GM12878 (cell line): ENCODE measurements at regions of chr1 and their contacts with region 1.

Region 1: DNA sequence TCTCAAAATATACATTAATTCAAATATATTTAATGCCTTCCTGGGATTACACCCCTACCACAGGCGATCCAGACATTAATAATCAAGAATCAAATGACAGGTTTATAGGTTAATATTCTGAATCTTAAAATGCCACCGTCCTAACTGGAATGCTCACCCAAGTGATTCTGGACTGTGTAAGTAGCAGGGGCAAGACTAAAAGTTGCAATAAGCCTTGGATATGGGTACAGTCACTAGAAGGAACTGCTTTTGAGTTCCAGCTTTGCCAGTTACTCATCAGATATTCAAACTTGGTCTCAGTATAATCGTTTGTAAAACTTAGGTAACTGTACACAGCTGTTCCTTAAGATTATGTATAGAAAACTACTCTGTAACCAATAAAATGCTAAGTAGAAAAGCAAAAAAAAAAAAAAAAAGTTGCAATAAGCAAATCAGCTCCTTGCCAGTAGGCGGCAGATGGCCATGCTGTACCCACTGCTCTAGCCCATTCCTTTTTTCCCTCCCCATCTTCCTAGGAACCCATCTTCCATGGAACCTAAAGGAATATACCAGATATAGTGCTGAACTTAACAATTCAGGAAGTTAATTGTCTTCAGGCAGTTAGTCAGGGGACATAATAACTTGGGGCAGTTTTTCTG is 10.5 kb downstream of the RO60 start:
- DNase-seq: no peak
- ATAC-seq: peak; percentile 35
- H3K4me3 ChIP-seq: 0 out of 2 replicates have a peak overlapping the region, but pooled peaks have one; percentile 11
- H3K27ac ChIP-seq: peak overlapping the region; percentile 62
- H3K4me1 ChIP-seq: peaks cover 26% of the 10 kb centered on the region
- H3K27me3 ChIP-seq: no peaks in the 10 kb centered on the region
- CTCF ChIP-seq: peak; percentile 45 to 66 (median 55)
- EP300 ChIP-seq: no peak
- POLR2A ChIP-seq: no peak
- RAD21 ChIP-seq: 0 out of 2 replicates have a peak, but pooled peaks have one; percentile 32

Region 2: GRCh38 chr1:193013005-193013404 is 56.9 kb before region 1 on chr1:
- CTCF ChIA-PET with region 1: no interaction called
- POLR2A ChIA-PET with region 1: no interaction called
- RAD21 ChIA-PET with region 1: no interaction called
- SMC1A ChIA-PET with region 1: no interaction called
- in situ Hi-C with region 1: no loop called
- intact Hi-C with region 1: no loop called
- DNase-seq: no peak
- ATAC-seq: no peak
- H3K4me3 ChIP-seq: no peak overlapping the region
- H3K27ac ChIP-seq: no peak overlapping the region
- H3K4me1 ChIP-seq: no peaks in the 10 kb centered on the region
- H3K27me3 ChIP-seq: no peaks in the 10 kb centered on the region
- CTCF ChIP-seq: no peak
- EP300 ChIP-seq: no peak
- POLR2A ChIP-seq: no peak
- RAD21 ChIP-seq: no peak

Region 3: DNA sequence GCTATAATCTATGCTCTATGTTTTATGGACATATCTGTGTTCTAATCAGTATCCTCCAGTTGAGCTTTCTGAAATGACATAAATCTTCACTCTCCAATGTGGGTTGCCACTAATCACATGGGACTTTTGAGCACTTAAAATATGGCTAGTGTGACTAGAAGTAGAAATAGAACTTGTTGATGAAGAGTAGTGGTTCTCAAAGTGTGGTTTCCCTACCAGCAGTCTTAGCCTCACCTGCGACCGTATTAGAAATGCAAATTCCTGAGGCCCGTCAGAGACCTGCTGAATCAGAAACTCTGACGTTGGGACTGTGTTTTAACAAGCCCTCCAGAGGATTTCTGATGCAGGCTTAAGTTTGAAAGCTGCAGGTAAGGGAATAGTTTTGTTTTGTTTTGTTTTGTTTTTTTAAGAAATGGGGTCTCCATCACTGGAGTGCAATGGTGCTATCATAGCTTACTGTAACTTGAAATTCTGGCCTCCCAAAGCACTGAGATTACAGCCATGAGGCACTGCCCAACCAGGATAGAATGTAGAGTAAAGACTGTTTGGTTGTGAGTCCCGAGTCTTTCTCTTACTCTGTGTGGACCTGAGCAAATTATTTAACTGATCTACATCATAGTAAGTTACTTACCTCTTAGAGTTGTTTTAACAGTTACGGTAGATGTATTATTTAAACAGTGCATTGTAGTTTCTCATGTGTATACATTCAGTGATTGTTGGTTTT is 13.7 kb after region 1 on chr1:
- CTCF ChIA-PET with region 1: interaction called, 18 read pairs
- POLR2A ChIA-PET with region 1: interaction called, 4 read pairs
- RAD21 ChIA-PET with region 1: interaction called, 8 read pairs
- SMC1A ChIA-PET with region 1: interaction called, 10 read pairs
- in situ Hi-C with region 1: no loop called
- intact Hi-C with region 1: no loop called
- DNase-seq: peak; percentile 47
- ATAC-seq: peak; percentile 92
- H3K4me3 ChIP-seq: no peak overlapping the region
- H3K27ac ChIP-seq: peak overlapping the region; percentile 56
- H3K4me1 ChIP-seq: peaks cover 11% of the 10 kb centered on the region; the same call in 1 of the 2 replicates
- H3K27me3 ChIP-seq: no peaks in the 10 kb centered on the region
- CTCF ChIP-seq: no peak
- EP300 ChIP-seq: peak; percentile 66 to 78; a peak in 3 of 4 replicates
- POLR2A ChIP-seq: no peak
- RAD21 ChIP-seq: no peak

Region 4: GRCh38 chr1:193104906-193105820 is 35.3 kb after region 1 on chr1 and contains the start of gene GLRX2:
- CTCF ChIA-PET with region 1: interaction called, 7 read pairs
- POLR2A ChIA-PET with region 1: interaction called, 4 read pairs
- RAD21 ChIA-PET with region 1: interaction called, 14 read pairs
- SMC1A ChIA-PET with region 1: interaction called, 3 read pairs
- in situ Hi-C with region 1: no loop called
- intact Hi-C with region 1: loop called (anchors 2 kb)
- DNase-seq: no peak
- ATAC-seq: peak; percentile 95
- H3K4me3 ChIP-seq: peak within 1 kb of the TSS; percentile 87
- H3K27ac ChIP-seq: peak within 1 kb of the TSS; percentile 58
- H3K4me1 ChIP-seq: no peaks in the 10 kb centered on the region
- H3K27me3 ChIP-seq: no peaks in the 10 kb centered on the region
- CTCF ChIP-seq: peak in 1 of 3 experiments; percentile 10; a peak in 1 of 6 replicates
- EP300 ChIP-seq: no peak
- POLR2A ChIP-seq: peak; percentile 86
- RAD21 ChIP-seq: peak; percentile 32; the same call in 1 of the 2 replicates
- polyA plus RNA-seq, gene GLRX2: 5.5 to 7.8 TPM

Region 5: GRCh38 chr1:193754732-193755427 is 685.0 kb after region 1 on chr1:
- CTCF ChIA-PET with region 1: no interaction called
- POLR2A ChIA-PET with region 1: no interaction called
- RAD21 ChIA-PET with region 1: no interaction called
- SMC1A ChIA-PET with region 1: no interaction called
- in situ Hi-C with region 1: no loop called
- intact Hi-C with region 1: no loop called
- DNase-seq: no peak
- ATAC-seq: no peak
- H3K4me3 ChIP-seq: no peak overlapping the region
- H3K27ac ChIP-seq: no peak overlapping the region
- H3K4me1 ChIP-seq: no peaks in the 10 kb centered on the region
- H3K27me3 ChIP-seq: no peaks in the 10 kb centered on the region
- CTCF ChIP-seq: no peak
- EP300 ChIP-seq: no peak
- POLR2A ChIP-seq: no peak
- RAD21 ChIP-seq: 0 out of 2 replicates have a peak, but pooled peaks have one; percentile 15